Prostate gland (tissue), 2 donors: ENCODE measurements at regions of chr1 and their contacts with region 1.

Region 1: DNA sequence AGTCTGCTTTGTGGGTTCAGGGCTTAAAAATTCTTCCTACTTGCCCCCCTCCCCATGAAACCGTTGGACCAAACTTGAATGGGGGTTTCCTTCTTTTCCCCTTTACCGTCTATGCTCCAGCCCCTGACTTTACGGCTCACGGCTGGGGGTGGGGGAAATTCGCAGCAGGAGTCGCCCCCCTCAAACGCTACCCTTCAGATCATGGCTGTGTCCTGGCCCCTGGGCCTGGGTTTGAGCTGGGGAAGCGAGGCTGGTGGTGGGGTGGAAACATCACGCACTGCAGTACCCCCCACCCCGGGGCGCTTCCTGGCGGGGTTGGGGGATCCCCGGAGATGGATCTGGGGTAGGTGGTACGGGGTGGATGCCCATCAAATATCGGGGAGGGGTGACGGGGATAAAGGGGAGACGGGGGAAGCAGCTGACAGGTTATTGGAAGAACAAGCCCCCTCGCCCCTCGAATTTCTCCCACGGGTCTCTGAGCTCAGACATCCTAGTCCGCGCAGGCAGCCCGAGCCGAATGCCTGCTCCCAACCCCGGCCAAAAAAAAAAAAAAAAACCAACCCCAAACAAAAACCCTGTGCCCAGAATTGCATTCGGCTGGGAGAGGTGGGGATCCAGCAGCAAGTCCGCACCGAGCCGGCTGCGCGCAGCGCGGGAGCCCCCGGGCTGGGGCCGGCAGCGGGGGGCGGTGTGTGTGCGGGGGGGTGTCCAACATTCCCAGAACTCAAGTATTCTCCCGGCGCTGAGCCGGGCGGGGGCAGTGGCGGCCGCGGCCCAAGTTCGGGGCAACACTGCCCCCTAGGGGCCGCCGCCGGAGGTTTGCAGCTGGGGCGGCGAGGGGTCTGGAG is 59.0 kb upstream of the ACOT11 start:
- DNase-seq: peak; percentile 69
- H3K4me3 ChIP-seq: peak overlapping the region; percentile 52 to 54
- H3K27ac ChIP-seq: peak overlapping the region; percentile 83 to 92
- H3K4me1 ChIP-seq: peaks cover 4% of the 10 kb centered on the region
- H3K27me3 ChIP-seq: no peaks in the 10 kb centered on the region
- CTCF ChIP-seq: peak; percentile 97 to 98 (median 98)
- POLR2A ChIP-seq: peak; percentile 12

Region 2: DNA sequence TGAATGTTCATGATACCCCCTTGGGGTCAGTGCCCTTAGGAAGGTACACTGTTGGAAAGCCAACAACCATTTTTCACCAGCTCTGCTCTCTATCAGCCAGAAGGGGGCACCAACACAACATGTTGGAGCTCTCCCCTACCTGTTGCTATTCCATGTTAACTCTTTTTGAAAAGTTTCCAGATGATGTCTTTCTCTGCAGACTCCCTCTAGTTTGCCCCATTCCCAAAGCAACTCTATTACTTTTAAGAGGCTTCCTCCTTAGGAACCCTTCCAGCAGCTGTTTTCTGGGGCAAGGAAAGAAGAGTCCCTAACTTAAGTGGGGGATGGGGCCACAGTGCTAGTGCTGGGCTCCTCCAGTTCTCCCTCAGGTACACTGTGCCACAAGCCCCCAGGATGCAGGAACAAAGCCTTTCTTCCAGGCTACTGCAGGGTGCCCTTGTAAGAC is 628.0 kb before region 1 on chr1:
- intact Hi-C with region 1: loop called (anchors 10 kb)
- DNase-seq: no peak
- H3K4me3 ChIP-seq: no peak overlapping the region
- H3K27ac ChIP-seq: no peak overlapping the region
- H3K4me1 ChIP-seq: no peaks in the 10 kb centered on the region
- H3K27me3 ChIP-seq: no peaks in the 10 kb centered on the region
- CTCF ChIP-seq: peak in 3 of 4 experiments; percentile 30 to 73 (median 56)
- POLR2A ChIP-seq: no peak

Region 3: GRCh38 chr1:54070171-54070837 is 418.7 kb before region 1 on chr1:
- intact Hi-C with region 1: loop called (anchors 5 kb)
- DNase-seq: no peak
- H3K4me3 ChIP-seq: no peak overlapping the region
- H3K27ac ChIP-seq: no peak overlapping the region
- H3K4me1 ChIP-seq: no peaks in the 10 kb centered on the region
- H3K27me3 ChIP-seq: no peaks in the 10 kb centered on the region
- CTCF ChIP-seq: peak; percentile 49 to 93 (median 80)
- POLR2A ChIP-seq: no peak

Region 4: DNA sequence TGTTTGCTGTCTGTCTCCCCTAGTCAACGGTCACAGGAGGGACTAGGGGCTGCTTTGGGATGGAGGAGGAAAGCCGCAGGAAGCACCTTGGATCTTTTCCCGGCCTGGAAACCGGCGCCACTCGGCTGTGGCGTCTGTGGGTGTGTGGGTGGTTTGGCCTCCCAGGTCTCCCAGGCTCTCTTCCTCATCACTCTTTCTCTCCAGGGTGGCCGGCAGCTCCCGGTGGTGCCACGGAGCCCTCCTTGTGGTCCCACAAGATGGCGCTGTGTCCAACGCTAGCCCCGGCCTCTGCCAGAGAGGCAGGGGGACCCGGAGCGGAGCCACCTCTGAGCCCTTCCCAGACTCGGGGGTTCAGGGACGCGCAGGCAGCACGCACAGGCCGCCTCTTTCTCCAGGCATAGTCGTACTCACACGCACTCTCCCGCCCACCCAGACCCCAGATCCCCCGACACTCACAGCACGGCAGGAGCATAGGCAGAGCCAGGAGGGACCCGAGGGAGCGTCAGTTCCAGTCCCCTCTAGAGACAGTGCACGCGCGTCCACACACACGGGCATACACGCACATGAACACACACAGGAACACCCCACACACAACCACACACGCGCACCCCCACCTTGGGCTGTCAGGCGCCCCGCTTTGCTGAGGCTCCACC is 367.4 kb before region 1 on chr1:
- intact Hi-C with region 1: loop called (anchors 2 kb)
- DNase-seq: peak; percentile 76
- H3K4me3 ChIP-seq: peak overlapping the region in 1 of 2 donors; percentile 20
- H3K27ac ChIP-seq: no peak overlapping the region
- H3K4me1 ChIP-seq: peaks cover 3% of the 10 kb centered on the region
- H3K27me3 ChIP-seq: no peaks in the 10 kb centered on the region
- CTCF ChIP-seq: peak; percentile 36 to 88 (median 80)
- POLR2A ChIP-seq: no peak

Region 5: DNA sequence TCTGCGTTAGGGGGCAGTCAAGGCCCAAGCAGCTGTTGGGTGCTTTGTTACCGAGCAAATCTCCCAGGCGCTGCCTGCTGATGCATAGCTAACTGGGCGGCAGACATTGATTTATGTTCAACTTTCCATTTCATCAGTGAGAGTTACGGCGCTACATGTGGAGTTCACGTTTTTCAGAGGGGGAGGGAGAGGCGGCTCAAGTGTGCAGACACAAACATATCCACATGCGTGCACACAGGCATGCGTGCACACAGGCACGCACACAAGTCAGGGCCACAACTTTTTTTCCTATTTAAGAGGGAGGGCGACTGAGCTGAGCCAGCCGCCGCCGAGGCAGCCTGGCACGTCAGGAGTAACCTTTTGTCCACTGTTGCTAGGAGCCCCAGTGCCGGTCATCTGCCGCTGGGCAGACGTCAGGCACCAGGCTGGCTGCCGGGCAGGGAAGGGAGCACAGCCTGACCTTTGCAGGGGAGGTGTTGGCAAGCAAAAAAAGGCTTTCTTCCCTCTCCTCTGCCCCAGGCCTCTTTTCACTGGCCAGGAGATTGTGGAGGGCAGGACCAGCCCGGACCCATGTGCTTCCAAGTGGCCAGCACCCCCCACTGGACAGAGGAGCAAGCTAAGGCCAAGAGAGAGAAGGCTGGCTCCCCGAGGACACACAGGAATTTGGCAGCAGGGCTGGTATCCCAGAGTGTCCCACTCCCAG is 215.8 kb before region 1 on chr1:
- intact Hi-C with region 1: loop called (anchors 1 kb)
- DNase-seq: no peak
- H3K4me3 ChIP-seq: no peak overlapping the region
- H3K27ac ChIP-seq: peak overlapping the region; percentile 80 to 86
- H3K4me1 ChIP-seq: peaks cover 44% of the 10 kb centered on the region
- H3K27me3 ChIP-seq: no peaks in the 10 kb centered on the region
- CTCF ChIP-seq: no peak
- POLR2A ChIP-seq: no peak

Region 6: GRCh38 chr1:55021965-55022546 is 533.1 kb after region 1 on chr1:
- intact Hi-C with region 1: no loop called
- DNase-seq: peak; percentile 72
- H3K4me3 ChIP-seq: no peak overlapping the region
- H3K27ac ChIP-seq: no peak overlapping the region
- H3K4me1 ChIP-seq: no peaks in the 10 kb centered on the region
- H3K27me3 ChIP-seq: no peaks in the 10 kb centered on the region
- CTCF ChIP-seq: peak; percentile 44 to 91 (median 69)
- POLR2A ChIP-seq: no peak